Naive thymus-derived CD4-positive, alpha-beta T cell (primary cell): ENCODE measurements at regions of chr2 and their contacts with region 1.

Region 1: DNA sequence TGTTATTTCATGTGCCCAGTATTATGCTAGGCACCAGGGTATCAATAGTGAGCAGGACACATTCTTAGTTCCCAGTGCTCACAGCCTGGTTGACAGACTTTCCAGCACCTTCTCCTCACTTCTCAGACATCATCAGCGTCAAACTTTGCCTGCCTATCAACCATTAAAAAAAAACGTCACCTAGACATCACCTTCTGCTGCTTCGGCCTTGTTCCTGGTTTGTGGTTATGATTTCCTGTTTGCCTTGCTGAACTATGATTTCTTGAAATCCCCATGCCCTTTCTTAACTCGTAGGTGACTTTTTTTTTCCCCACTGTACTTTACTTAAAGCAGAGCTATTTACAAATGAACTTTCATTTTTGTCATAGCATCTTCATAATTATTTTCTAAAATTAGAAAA is 60.4 kb upstream of the NABP1 start:
- DNase-seq: peak in 8 of 9 donors; percentile 47 to 89 (median 84)
- ATAC-seq: peak; percentile 92
- H3K4me3 ChIP-seq: peak overlapping the region; percentile 11
- H3K4me3 Mint-ChIP-seq: peak overlapping the region; percentile 0 to 71 (median 40)
- H3K27ac ChIP-seq: peak overlapping the region; percentile 84
- H3K27ac Mint-ChIP-seq: peak overlapping the region; percentile 80 to 98 (median 89)
- H3K4me1 ChIP-seq: peaks cover 21 to 22% of the 10 kb centered on the region in 2 donors
- H3K4me1 Mint-ChIP-seq: peaks cover 31 to 59% (median 51%) of the 10 kb centered on the region in 7 donors
- H3K27me3 ChIP-seq: no peaks in the 10 kb centered on the region
- H3K27me3 Mint-ChIP-seq: no peaks in the 10 kb centered on the region

Region 2: DNA sequence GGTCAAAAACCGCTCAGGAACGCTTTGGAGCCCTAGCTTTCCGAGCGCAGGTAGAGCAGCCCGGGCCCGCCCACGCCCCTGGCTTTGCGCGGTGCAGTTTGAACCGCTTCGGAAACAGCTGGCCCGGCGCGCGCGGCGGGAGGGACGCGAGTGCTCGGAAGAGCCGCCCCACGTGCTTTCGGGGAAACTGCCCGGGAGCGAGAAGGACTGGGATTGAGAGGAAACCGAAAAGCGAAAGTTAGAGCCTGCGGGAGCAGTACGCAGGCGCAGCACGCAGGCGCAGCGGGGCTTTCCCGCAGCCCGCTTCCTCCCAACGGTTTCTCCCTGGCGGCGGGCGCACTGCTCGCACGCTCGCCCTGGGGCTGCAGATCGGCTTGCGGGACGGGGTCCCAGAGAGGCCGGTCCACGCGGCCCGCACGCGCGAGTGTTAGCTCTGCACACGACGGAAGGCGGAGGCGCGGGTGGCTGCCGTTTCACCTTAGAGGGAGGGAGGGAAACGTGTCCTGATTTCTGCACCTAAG is 597.3 kb before region 1 on chr2:
- CTCF ChIA-PET with region 1: no interaction called
- POLR2A ChIA-PET with region 1: no interaction called
- intact Hi-C with region 1: loop called in 1 of 2 experiments (anchors 5 kb)
- DNase-seq: peak; percentile 89 to 99 (median 94)
- ATAC-seq: peak; percentile 88
- H3K4me3 ChIP-seq: peak overlapping the region; percentile 78
- H3K4me3 Mint-ChIP-seq: no peak overlapping the region
- H3K27ac ChIP-seq: peak overlapping the region; percentile 82
- H3K27ac Mint-ChIP-seq: no peak overlapping the region
- H3K4me1 ChIP-seq: peaks cover 44 to 48% of the 10 kb centered on the region in 2 donors
- H3K4me1 Mint-ChIP-seq: peaks cover 11 to 46% (median 32%) of the 10 kb centered on the region in 7 donors
- H3K27me3 ChIP-seq: no peaks in the 10 kb centered on the region
- H3K27me3 Mint-ChIP-seq: peaks cover 0 to 2% (median 0%) of the 10 kb centered on the region in 5 donors

Region 3: DNA sequence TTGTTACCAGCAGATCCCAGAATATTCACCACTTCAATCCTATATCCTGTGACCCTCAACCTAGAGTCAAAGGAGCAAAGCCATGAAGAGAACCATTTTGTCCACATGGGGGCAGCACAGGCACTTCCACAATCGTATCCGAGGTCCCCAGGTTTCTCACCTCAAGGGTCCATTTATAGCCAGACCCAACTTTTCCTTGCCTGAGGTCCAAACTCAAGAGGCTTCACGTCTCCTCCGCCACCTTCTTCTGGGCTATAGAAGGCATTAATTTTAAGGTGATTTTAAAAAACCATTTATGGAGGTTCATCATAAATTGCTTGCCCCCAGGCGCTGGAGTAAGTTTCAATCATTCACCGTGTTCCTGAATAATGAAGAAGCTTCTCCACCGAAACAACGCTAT is 51.2 kb before region 1 on chr2:
- CTCF ChIA-PET with region 1: interaction called, 4 read pairs
- POLR2A ChIA-PET with region 1: no interaction called
- intact Hi-C with region 1: loop called (anchors 1 kb)
- DNase-seq: peak; percentile 16 to 64 (median 42)
- ATAC-seq: peak; percentile 72
- H3K4me3 ChIP-seq: no peak overlapping the region
- H3K4me3 Mint-ChIP-seq: no peak overlapping the region
- H3K27ac ChIP-seq: no peak overlapping the region
- H3K27ac Mint-ChIP-seq: no peak overlapping the region
- H3K4me1 ChIP-seq: peaks cover 8 to 14% of the 10 kb centered on the region in 2 donors
- H3K4me1 Mint-ChIP-seq: peaks cover 14 to 34% (median 22%) of the 10 kb centered on the region in 7 donors
- H3K27me3 ChIP-seq: peaks cover 0 to 7% of the 10 kb centered on the region in 2 donors
- H3K27me3 Mint-ChIP-seq: peaks cover 4 to 69% (median 13%) of the 10 kb centered on the region in 5 donors

Region 4: DNA sequence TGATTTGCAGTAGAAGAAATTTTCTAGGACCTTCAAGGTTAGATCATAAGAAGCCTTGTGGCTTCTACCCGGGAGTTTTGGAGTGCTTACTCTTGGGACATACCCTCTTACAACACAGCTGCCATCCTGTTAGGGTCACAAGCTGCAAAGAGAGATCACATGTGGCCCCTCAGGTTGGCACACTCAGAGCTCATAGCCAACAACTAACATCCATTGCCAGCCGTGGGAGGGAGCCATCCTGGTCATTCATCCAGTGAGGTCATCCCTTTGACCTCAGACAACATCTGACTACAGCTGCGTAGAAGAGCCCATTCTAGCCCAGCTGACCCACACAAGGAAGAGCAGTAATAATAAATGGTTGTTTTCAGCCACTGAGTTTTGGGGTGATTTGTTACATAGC is 16.5 kb before region 1 on chr2:
- CTCF ChIA-PET with region 1: interaction called, 3 read pairs
- POLR2A ChIA-PET with region 1: interaction called, 4 read pairs
- intact Hi-C with region 1: loop called in 1 of 2 experiments (anchors 2 kb)
- DNase-seq: no peak
- ATAC-seq: peak; percentile 36
- H3K4me3 ChIP-seq: no peak overlapping the region
- H3K4me3 Mint-ChIP-seq: no peak overlapping the region
- H3K27ac ChIP-seq: no peak overlapping the region
- H3K27ac Mint-ChIP-seq: no peak overlapping the region
- H3K4me1 ChIP-seq: no peaks in the 10 kb centered on the region
- H3K4me1 Mint-ChIP-seq: peaks cover 0 to 1% (median 0%) of the 10 kb centered on the region in 7 donors
- H3K27me3 ChIP-seq: no peaks in the 10 kb centered on the region
- H3K27me3 Mint-ChIP-seq: peaks cover 0 to 30% (median 0%) of the 10 kb centered on the region in 5 donors

Region 5: GRCh38 chr2:191637182-191638078 is 19.9 kb after region 1 on chr2:
- CTCF ChIA-PET with region 1: interaction called, 4 read pairs
- POLR2A ChIA-PET with region 1: interaction called, 14 read pairs
- intact Hi-C with region 1: loop called (anchors 1 kb)
- DNase-seq: peak in 7 of 9 donors; percentile 17 to 39 (median 31)
- ATAC-seq: peak; percentile 94
- H3K4me3 ChIP-seq: no peak overlapping the region
- H3K4me3 Mint-ChIP-seq: peak overlapping the region; percentile 29 to 78 (median 68)
- H3K27ac ChIP-seq: peak overlapping the region; percentile 43
- H3K27ac Mint-ChIP-seq: peak overlapping the region; percentile 44 to 96 (median 80)
- H3K4me1 ChIP-seq: peaks cover 25 to 26% of the 10 kb centered on the region in 2 donors
- H3K4me1 Mint-ChIP-seq: peaks cover 38 to 60% (median 45%) of the 10 kb centered on the region in 7 donors
- H3K27me3 ChIP-seq: no peaks in the 10 kb centered on the region
- H3K27me3 Mint-ChIP-seq: peaks cover 0 to 5% (median 0%) of the 10 kb centered on the region in 5 donors

Region 6: DNA sequence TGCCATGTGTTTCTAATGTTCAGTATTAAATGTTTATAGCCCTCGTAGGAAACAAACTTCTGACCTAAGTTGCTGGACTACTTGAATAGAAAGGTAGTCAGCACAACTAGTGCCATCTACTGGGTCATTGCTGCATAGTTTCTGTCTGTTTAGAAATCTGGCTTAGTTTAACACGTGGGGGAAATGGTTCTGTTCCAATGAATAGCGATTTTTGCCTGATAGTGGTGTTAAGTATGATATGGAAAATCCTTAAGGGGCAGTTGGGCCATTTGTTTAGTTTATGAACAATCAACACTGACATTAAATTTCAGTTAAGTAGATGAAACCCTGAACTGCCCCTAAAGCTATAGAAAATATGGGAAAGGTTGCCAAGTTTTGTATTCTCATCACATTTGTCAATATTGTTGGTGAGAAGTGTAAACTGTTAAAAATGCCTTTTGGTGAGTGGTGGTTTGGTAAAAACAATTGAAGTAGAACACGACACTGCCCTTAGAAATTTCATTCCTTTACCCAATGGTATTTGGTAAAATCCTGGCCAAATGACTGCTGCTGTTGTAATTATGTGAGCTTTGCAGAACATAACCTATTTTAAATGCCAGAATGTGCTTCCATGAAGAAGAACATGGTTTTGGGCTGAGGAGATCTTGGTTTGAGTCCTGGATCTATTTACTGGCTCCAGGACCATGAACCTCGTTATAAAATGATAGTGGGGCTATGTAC is 73.6 kb after region 1 on chr2:
- CTCF ChIA-PET with region 1: no interaction called
- POLR2A ChIA-PET with region 1: no interaction called
- intact Hi-C with region 1: loop called in 1 of 2 experiments (anchors 1 kb)
- DNase-seq: peak in 7 of 9 donors; percentile 44 to 69 (median 61)
- ATAC-seq: peak; percentile 93
- H3K4me3 ChIP-seq: no peak overlapping the region
- H3K4me3 Mint-ChIP-seq: no peak overlapping the region
- H3K27ac ChIP-seq: no peak overlapping the region
- H3K27ac Mint-ChIP-seq: peak overlapping the region in 5 of 9 donors; percentile 31 to 61 (median 44)
- H3K4me1 ChIP-seq: peaks cover 3 to 11% of the 10 kb centered on the region in 2 donors
- H3K4me1 Mint-ChIP-seq: peaks cover 8 to 28% (median 15%) of the 10 kb centered on the region in 7 donors
- H3K27me3 ChIP-seq: no peaks in the 10 kb centered on the region
- H3K27me3 Mint-ChIP-seq: no peaks in the 10 kb centered on the region

Region 7: GRCh38 chr2:191740016-191740419 is 122.4 kb after region 1 on chr2:
- CTCF ChIA-PET with region 1: no interaction called
- POLR2A ChIA-PET with region 1: no interaction called
- intact Hi-C with region 1: loop called in 1 of 2 experiments (anchors 1 kb)
- DNase-seq: peak in 8 of 9 donors; percentile 42 to 83 (median 78)
- ATAC-seq: peak; percentile 95
- H3K4me3 ChIP-seq: no peak overlapping the region
- H3K4me3 Mint-ChIP-seq: peak overlapping the region; percentile 0 to 62 (median 21)
- H3K27ac ChIP-seq: no peak overlapping the region
- H3K27ac Mint-ChIP-seq: peak overlapping the region; percentile 0 to 89 (median 44)
- H3K4me1 ChIP-seq: peaks cover 14% of the 10 kb centered on the region in 2 donors
- H3K4me1 Mint-ChIP-seq: peaks cover 13 to 18% (median 13%) of the 10 kb centered on the region in 7 donors
- H3K27me3 ChIP-seq: no peaks in the 10 kb centered on the region
- H3K27me3 Mint-ChIP-seq: peaks cover 10 to 45% (median 21%) of the 10 kb centered on the region in 5 donors

Region 8: GRCh38 chr2:192288295-192288694 is 670.7 kb after region 1 on chr2:
- CTCF ChIA-PET with region 1: no interaction called
- POLR2A ChIA-PET with region 1: no interaction called
- intact Hi-C with region 1: no loop called
- DNase-seq: no peak
- ATAC-seq: no peak
- H3K4me3 ChIP-seq: no peak overlapping the region
- H3K4me3 Mint-ChIP-seq: no peak overlapping the region
- H3K27ac ChIP-seq: no peak overlapping the region
- H3K27ac Mint-ChIP-seq: no peak overlapping the region
- H3K4me1 ChIP-seq: no peaks in the 10 kb centered on the region
- H3K4me1 Mint-ChIP-seq: no peaks in the 10 kb centered on the region
- H3K27me3 ChIP-seq: no peaks in the 10 kb centered on the region
- H3K27me3 Mint-ChIP-seq: peaks cover 0 to 5% (median 0%) of the 10 kb centered on the region in 5 donors